Heart right ventricle (tissue), 16 donors: ENCODE measurements at regions of chr2 and their contacts with region 1.

Region 1: DNA sequence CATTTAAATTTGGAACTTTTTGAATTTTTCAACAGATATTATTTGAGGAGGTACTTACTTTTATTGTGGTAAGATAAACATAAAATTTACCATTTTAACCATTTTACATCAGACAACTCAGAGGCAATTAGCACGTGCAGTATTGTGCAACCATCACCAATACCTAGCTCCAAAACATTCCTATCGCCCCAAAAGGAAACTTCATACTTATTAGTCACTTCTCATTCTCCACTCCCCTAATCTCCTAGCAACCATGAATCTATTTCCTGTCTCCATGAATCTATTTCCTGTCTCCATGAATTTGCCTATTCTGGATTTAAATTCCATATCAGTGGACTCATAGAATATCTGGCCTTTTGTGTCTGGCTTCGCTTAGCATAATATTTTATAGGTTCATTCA is 69.9 kb upstream of the FAM136A start:
- DNase-seq: no peak
- ATAC-seq: no peak
- H3K4me3 ChIP-seq: no peak overlapping the region
- H3K27ac ChIP-seq: no peak overlapping the region
- H3K4me1 ChIP-seq: no peaks in the 10 kb centered on the region
- H3K27me3 ChIP-seq: no peaks in the 10 kb centered on the region
- CTCF ChIP-seq: no peak

Region 2: DNA sequence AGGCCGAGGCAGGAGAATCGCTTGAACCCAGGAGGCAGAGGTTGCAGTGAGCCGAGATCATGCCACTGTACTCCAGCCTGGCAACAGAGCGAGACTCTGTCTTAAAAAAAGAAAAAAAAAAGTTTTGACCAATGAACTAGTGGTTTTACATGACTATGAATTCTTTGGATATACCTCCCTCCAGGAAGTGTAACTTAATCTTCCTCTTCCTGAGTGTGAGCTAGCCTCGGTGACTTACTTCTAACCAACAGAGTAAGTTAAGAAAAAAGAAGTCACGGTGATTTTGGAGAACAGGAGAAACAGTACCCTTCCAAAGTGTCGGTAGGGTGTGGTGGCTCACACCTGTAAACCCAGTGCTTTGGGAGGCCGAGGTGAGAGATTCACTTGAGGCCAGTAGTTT is 130.4 kb before region 1 on chr2:
- intact Hi-C with region 1: loop called in 1 of 10 experiments (anchors 5 kb)
- DNase-seq: no peak
- ATAC-seq: no peak
- H3K4me3 ChIP-seq: no peak overlapping the region
- H3K27ac ChIP-seq: no peak overlapping the region
- H3K4me1 ChIP-seq: peaks cover 17 to 65% (median 41%) of the 10 kb centered on the region in 9 donors
- H3K27me3 ChIP-seq: no peaks in the 10 kb centered on the region
- CTCF ChIP-seq: no peak